Ascending aorta (tissue), 2 donors: ENCODE measurements at regions of chr10 and their contacts with region 1.

Region 1: DNA sequence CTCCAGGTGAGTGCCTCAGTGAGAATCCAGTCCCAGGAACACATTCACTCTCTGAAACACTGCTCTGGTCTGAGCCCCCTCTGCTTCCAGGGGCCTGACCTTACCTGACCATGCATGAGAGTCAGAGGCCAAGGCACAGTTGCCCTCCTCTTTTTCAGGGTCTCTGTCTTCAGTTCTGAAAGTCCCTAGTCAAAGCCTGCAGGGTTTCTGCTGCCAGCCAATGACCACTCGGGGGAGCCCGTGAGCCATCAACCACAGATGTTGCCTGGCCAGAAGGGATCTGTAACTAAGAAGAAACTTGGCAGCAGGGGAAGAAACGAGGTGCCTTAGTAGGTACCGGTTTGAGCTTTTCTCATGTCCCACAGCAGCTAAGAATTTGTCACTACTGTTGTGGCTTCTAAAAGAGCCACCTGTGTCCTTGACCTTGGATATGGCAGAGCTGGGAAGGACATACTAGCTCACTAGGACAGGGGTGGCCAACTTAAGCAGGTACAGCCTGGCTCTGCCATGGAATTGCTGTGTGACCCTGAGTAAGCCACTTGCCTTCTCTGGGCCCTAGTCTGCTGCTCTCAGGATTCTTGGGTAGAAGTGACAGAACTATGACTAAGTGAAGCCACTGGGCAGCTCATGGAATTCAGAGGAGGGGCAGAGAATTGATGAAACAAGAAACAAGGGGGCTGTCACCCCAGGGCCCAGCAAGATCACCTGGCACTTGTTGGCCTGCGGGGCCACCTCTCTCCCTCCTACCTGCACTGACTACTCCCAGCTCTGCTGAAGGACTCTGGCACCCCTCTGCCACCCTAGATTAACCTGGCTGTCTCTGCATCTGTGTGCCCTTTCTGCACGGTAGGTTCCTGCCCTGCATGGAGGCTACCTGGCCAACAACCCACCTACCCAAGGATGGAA is 83.8 kb upstream of the GPR26 start:
- DNase-seq: peak; percentile 39 to 86
- H3K4me3 ChIP-seq: no peak overlapping the region
- H3K27ac ChIP-seq: no peak overlapping the region
- H3K4me1 ChIP-seq: peaks cover 3 to 10% of the 10 kb centered on the region in 2 donors
- H3K27me3 ChIP-seq: no peaks in the 10 kb centered on the region
- CTCF ChIP-seq: peak; percentile 73 to 90 (median 85)

Region 2: GRCh38 chr10:123537188-123537961 is 45.0 kb before region 1 on chr10:
- intact Hi-C with region 1: no loop called
- DNase-seq: no peak
- H3K4me3 ChIP-seq: no peak overlapping the region
- H3K27ac ChIP-seq: no peak overlapping the region
- H3K4me1 ChIP-seq: no peaks in the 10 kb centered on the region
- H3K27me3 ChIP-seq: no peaks in the 10 kb centered on the region
- CTCF ChIP-seq: no peak

Region 3: DNA sequence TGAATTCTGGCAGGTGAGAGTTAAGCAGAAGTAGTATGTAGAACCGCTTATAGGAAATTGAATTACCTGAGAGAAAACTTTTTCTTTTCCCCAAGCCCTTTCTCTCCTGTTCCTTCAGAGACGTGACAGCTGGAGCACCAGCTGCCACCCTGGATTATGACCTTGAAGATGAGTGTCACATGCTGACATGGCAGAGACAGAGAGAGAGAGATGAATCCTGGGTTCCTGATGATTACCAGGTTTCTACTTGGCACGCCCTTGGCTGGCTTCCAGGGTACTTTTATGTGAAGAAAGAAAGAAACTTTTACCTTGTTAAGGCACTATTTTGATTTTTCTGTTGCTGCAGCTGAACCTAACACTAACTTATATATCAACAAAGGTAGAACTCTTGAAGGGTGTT is 183.7 kb after region 1 on chr10:
- intact Hi-C with region 1: loop called (anchors 5 kb)
- DNase-seq: no peak
- H3K4me3 ChIP-seq: no peak overlapping the region
- H3K27ac ChIP-seq: no peak overlapping the region
- H3K4me1 ChIP-seq: no peaks in the 10 kb centered on the region
- H3K27me3 ChIP-seq: no peaks in the 10 kb centered on the region
- CTCF ChIP-seq: no peak

Region 4: DNA sequence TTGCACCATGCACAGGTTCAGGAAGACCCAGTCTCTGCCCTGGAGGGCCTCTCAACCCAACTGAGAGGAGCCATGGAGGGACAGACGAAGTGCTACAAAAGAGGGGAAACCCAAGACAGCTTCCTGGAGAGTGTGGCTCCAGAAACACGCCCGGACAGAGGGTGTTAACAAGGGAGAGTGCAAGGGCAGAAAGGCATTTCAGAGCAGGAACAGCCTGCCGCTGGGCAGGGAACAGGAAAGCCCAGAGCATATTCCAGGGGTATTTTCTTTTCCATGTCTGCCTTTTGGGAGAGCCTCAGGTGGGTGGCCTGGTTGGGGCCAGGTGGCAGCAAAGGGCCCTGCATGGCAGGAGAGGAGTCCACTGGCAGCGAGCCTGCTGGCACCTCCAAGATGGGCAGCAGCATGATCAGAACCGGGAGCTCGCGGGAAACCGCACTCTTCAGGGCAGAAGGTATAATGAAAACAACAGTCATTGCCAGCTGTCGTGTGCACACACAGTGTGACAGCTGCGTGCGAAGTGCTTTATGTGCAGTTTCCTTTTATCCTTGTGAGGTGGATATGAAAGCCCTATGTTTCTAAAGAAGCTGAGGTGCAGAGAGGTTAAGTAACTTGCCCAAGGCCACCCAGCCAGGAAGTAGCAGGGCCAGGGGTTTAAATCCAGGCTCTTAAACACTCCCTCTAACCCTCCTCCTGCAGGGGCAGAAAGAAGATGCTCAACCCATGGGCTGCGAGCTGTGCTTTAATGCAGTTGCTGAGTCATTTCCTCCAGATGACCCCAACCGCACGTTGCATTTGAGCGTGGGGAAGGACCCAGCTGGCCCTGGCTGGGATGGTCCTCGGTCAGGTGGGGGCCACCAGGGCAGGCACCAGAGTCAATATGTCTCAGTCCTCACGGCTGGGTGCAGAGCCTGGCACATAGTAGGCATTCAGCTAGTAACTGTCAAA is 707.8 kb after region 1 on chr10:
- intact Hi-C with region 1: loop called (anchors 10 kb)
- DNase-seq: peak in 1 of 2 donors; percentile 71
- H3K4me3 ChIP-seq: no peak overlapping the region
- H3K27ac ChIP-seq: peak overlapping the region in 1 of 2 donors; percentile 19
- H3K4me1 ChIP-seq: peaks cover 6 to 14% of the 10 kb centered on the region in 2 donors
- H3K27me3 ChIP-seq: no peaks in the 10 kb centered on the region
- CTCF ChIP-seq: no peak